ENCODE measurements at regions of chr2 and their contacts with region 1.

Region 1: DNA sequence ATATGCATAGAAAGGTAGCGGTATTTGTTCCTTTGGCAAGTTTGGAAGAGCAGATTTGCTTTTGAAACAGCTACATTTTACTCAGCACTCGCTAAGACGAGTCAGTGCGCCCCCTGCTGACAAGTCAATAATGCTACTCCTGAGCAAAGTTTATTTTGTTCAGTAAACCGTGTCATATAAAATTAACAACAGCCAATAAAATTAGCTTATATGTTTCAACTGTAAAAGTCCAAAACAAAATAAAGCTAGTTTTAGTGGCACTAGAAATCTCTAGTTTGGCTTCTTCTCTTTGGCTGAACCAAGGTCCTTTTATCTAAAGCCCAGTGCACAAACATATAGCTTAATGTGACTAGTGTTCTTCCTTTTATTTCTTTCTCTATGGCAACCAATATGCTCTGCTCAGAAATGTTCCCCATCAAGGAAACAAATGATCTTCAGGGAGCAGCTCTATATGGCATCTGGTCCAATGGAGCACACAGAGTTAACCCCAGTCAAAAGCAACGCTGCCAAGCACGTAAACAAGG is 4.2 kb upstream of the POU3F3 start:
- DNase-seq: peak; percentile 77
- H3K4me3 Mint-ChIP-seq: no peak overlapping the region
- H3K27ac Mint-ChIP-seq: no peak overlapping the region
- H3K4me1 Mint-ChIP-seq: peaks cover 25% of the 10 kb centered on the region
- H3K27me3 Mint-ChIP-seq: peaks cover 100% of the 10 kb centered on the region

Region 2: DNA sequence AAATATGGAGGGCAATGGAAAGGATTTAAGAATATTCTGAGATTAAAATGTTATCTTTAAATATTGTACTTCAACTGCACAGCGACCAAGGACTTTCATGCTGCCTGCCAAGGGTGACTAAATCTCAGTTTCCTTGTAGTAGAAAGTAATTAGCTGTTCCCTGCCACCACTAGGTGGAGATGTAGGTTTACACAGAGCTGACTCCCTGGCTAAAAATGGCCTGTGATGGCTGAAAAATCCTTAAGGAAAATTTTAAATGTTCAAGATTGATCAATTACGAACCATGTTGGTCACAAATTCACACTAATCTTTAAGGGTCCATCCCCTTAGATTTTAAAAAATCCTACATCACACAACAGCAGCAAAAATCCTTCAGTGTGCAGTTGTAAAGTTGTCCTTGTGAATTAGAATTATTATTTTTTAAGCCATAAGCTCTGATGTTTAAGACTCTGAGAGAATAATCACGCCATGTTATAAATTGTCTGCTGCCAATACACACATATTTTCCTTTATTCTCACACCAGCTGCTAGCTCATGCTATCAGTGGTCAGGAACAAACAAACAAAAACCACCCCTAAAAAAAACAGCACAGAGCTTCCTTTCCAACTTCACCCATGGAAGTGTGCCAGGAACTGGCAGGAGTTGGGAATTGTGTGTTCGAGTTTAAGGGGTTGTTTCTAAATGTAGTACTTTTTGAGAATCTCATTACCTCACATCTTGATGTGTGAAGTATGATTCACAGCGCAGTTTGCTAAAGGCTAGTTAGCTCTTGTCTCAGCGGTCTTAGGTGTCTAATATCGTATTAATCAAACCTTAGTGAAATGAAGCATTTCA is 1688.0 kb before region 1 on chr2:
- CTCF ChIA-PET with region 1: interaction called, 21 read pairs
- DNase-seq: no peak
- H3K4me3 Mint-ChIP-seq: no peak overlapping the region
- H3K27ac Mint-ChIP-seq: no peak overlapping the region
- H3K4me1 Mint-ChIP-seq: no peaks in the 10 kb centered on the region
- H3K27me3 Mint-ChIP-seq: no peaks in the 10 kb centered on the region

Region 3: GRCh38 chr2:104493698-104494097 is 356.0 kb before region 1 on chr2:
- CTCF ChIA-PET with region 1: no interaction called
- DNase-seq: no peak
- H3K4me3 Mint-ChIP-seq: no peak overlapping the region
- H3K27ac Mint-ChIP-seq: no peak overlapping the region
- H3K4me1 Mint-ChIP-seq: no peaks in the 10 kb centered on the region
- H3K27me3 Mint-ChIP-seq: no peaks in the 10 kb centered on the region

Region 4: DNA sequence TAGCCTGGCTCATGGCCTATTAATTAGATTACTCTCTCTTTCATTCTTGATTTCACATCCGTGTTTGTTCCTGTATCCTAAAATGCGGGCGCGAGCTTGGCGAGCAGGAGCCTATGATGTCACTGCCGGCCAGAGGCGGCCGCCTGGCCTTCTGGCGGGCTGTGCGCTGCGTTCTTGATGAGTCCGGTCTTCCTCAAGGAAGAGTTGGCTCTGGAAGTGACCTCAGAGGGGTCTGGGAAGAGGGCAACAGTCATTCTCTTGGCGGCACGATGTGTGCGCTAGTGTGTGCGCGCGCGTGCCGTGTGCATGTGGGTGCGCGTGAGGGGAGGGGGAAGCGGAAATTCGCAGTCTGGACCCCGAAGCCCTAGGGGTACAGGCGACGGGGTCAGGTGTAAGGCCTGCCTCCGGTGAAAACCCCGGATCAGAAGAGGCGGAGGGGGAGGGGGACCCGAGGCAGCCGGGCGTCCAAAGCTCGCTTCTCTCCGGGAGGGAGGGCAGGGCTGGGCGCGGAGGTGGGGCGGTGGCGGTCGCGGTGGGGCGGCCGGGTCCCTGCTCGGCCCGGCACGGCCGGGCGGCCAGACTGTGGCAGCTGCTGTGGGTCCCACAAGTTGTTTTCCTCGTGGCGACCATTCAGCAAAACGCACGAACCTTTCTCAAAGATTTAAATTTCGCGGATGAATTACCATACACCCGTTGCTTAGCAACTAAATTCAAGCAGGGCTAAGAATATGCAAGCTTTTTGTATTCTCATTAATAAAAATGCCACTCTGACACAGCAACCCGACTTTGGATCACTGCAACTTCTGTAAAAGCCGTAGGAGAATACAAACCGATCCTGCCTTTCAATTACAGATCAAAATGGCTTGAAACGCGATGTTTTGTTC is 12.6 kb after region 1 on chr2:
- CTCF ChIA-PET with region 1: interaction called, 39 read pairs
- DNase-seq: no peak
- H3K4me3 Mint-ChIP-seq: peak overlapping the region; percentile 15
- H3K27ac Mint-ChIP-seq: peak overlapping the region; percentile 83
- H3K4me1 Mint-ChIP-seq: peaks cover 8% of the 10 kb centered on the region
- H3K27me3 Mint-ChIP-seq: peaks cover 90% of the 10 kb centered on the region

Region 5: GRCh38 chr2:104872866-104873688 is 23.4 kb after region 1 on chr2:
- CTCF ChIA-PET with region 1: interaction called, 39 read pairs
- DNase-seq: peak; percentile 74
- H3K4me3 Mint-ChIP-seq: peak overlapping the region; percentile 51
- H3K27ac Mint-ChIP-seq: no peak overlapping the region
- H3K4me1 Mint-ChIP-seq: peaks cover 14% of the 10 kb centered on the region
- H3K27me3 Mint-ChIP-seq: peaks cover 79% of the 10 kb centered on the region

Measured in activated naive CD4-positive, alpha-beta T cell treated with anti-CD3 and anti-CD28 coated beads, Interleukin-2, amount 10 ng/mL, durations not matched to agents 7 days and 5 days (primary cell).